A673 (cell line): ENCODE measurements at regions of chr15 and their contacts with region 1.

Region 1: DNA sequence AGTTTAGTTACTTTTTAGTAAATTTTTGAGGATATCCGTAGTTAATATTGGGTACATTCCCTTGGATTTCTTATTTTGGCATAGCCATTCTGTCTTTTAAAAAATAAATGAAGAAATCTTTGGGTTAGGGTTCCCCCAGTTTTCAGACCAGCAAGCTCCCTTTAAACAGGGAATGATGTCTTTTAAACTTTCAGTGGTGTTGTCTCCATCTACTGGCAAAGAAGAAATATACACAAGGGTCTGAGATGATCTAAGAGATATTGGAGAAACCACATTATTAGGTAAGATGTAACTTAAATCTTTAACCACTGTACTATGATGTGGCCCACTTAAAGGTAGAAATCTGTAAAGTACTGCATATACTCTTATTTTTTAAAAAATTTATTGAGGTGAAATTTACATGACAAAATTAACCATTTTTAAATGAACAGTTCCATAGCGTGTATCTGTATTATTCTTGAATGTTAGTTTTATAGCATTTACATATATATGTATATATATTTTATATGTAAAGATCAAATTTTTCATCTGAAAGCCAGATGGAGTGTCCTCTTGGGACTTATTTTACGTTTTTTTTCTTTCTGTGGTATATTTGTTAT is 35.1 kb upstream of the EIF3J start:
- DNase-seq: peak; percentile 58
- H3K4me3 ChIP-seq: no peak overlapping the region
- H3K27ac ChIP-seq: no peak overlapping the region
- H3K4me1 ChIP-seq: peaks cover 4% of the 10 kb centered on the region
- H3K27me3 ChIP-seq: no peaks in the 10 kb centered on the region
- CTCF ChIP-seq: peak; percentile 68

Region 2: GRCh38 chr15:44222478-44222877 is 279.4 kb before region 1 on chr15:
- CTCF ChIA-PET with region 1: no interaction called
- POLR2A ChIA-PET with region 1: no interaction called
- intact Hi-C with region 1: loop called (anchors 5 kb)
- DNase-seq: no peak
- H3K4me3 ChIP-seq: no peak overlapping the region
- H3K27ac ChIP-seq: no peak overlapping the region
- H3K4me1 ChIP-seq: no peaks in the 10 kb centered on the region
- H3K27me3 ChIP-seq: no peaks in the 10 kb centered on the region
- CTCF ChIP-seq: no peak

Region 3: GRCh38 chr15:44296625-44297524 is 205.0 kb before region 1 on chr15:
- CTCF ChIA-PET with region 1: interaction called, 4 read pairs
- POLR2A ChIA-PET with region 1: no interaction called
- intact Hi-C with region 1: loop called (anchors 5 kb)
- DNase-seq: peak; percentile 42
- H3K4me3 ChIP-seq: no peak overlapping the region
- H3K27ac ChIP-seq: peak overlapping the region; percentile 20
- H3K4me1 ChIP-seq: peaks cover 11% of the 10 kb centered on the region
- H3K27me3 ChIP-seq: no peaks in the 10 kb centered on the region
- CTCF ChIP-seq: no peak

Region 4: DNA sequence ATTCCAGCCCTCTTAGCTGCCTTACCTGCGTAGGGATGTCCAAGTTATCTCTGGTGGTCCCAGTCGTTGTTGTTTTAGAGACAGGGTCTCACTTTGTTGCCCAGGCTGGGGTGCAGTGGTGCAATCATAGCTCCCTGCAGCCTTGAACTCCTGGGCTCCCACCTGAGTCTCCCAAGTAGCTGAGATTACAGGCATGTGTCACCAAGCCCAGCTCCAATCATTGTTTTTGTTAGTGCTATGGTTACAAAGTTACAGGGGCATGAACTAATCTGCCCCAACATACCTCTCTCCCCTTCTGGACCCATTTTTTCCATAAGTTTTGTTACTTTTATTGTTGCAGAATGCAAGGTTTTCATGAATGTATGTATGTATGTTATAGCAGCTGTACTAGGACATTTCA is 19.8 kb before region 1 on chr15:
- CTCF ChIA-PET with region 1: interaction called, 15 read pairs
- POLR2A ChIA-PET with region 1: no interaction called
- intact Hi-C with region 1: no loop called
- DNase-seq: no peak
- H3K4me3 ChIP-seq: no peak overlapping the region
- H3K27ac ChIP-seq: no peak overlapping the region
- H3K4me1 ChIP-seq: peaks cover 7% of the 10 kb centered on the region
- H3K27me3 ChIP-seq: no peaks in the 10 kb centered on the region
- CTCF ChIP-seq: no peak

Region 5: DNA sequence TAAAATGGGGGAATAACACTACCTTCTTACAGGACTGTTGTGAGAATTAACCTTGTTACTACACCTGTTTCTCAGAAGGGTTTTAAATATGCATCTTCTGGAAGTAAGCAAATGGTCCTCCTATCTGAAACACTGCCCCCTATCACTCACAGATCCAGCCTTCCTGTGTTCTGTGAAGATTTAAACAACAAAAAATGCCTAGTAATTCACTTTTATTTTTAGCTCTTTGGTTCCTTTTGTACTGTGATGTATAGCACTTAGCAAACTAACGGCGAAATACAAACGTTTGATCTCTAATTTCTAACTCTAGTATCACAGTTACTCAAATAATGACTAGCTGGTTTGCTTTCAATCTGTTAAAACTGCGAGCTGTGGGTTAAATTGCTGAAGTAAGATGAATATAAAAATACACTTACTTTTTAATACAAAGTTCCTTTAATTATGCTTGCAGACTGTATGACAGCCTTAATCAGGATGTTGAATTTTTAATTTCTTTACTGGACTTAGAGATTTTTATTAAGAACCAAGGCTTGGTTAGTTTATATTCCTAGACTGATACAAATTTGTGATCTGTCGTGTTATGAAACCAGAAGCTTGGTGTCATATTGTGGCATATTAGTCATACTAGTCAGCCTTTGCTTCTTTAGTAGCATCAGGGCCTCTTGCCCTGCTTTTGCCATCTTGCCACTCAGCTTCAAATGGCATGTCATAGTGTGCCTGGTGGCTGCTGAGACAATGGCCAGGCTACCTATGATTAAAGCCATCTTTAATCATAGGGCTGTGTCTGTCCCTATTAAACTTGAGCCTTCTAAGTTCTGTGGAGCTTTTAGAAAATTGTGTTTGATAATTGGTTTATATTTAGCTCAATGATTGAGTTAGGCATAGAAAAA is 44.3 kb after region 1 on chr15:
- CTCF ChIA-PET with region 1: interaction called, 12 read pairs
- POLR2A ChIA-PET with region 1: no interaction called
- intact Hi-C with region 1: no loop called
- DNase-seq: no peak
- H3K4me3 ChIP-seq: no peak overlapping the region
- H3K27ac ChIP-seq: no peak overlapping the region
- H3K4me1 ChIP-seq: no peaks in the 10 kb centered on the region
- H3K27me3 ChIP-seq: no peaks in the 10 kb centered on the region
- CTCF ChIP-seq: peak; percentile 64

Region 6: DNA sequence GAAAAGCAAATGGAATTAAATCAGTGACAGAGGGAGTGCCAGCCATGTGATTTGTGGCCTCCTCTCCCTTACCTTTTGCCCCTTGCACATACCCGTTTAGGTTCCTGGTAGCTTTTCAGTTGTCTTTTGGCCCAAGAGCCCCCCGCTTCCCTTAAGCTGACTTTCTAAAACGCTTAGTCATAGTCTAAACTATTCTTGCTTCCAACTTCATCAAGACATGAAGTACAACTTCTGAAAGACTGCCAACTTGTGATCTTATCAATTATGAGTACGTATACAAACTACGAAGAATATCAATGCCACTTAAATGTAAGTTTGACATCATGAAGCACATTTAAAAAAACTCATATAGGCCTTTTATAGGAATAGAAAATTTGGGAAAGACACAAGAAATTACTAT is 97.0 kb after region 1 on chr15:
- CTCF ChIA-PET with region 1: no interaction called
- POLR2A ChIA-PET with region 1: no interaction called
- intact Hi-C with region 1: no loop called
- DNase-seq: peak; percentile 31
- H3K4me3 ChIP-seq: no peak overlapping the region
- H3K27ac ChIP-seq: no peak overlapping the region
- H3K4me1 ChIP-seq: no peaks in the 10 kb centered on the region
- H3K27me3 ChIP-seq: no peaks in the 10 kb centered on the region
- CTCF ChIP-seq: no peak

Region 7: DNA sequence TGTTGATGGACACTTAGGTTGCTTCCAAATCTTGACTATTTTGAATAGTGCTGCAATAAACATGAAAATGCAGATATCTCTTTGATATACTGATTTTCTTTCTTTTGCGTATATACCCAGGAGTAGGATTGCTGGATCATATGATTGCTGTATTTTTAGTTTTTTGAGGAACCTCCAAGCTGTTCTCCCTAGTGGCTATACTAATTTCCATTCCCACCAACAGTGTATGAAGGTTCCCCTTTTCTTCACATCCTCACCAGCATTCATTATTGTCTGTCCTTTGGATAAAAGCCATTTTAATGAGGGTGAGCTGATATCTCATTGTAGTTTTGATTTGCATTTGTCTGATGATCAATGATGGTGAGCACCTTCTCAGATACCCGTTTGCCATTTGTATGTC is 196.8 kb after region 1 on chr15:
- CTCF ChIA-PET with region 1: no interaction called
- POLR2A ChIA-PET with region 1: no interaction called
- intact Hi-C with region 1: no loop called
- DNase-seq: no peak
- H3K4me3 ChIP-seq: no peak overlapping the region
- H3K27ac ChIP-seq: no peak overlapping the region
- H3K4me1 ChIP-seq: no peaks in the 10 kb centered on the region
- H3K27me3 ChIP-seq: no peaks in the 10 kb centered on the region
- CTCF ChIP-seq: no peak